Natural killer cell (primary cell): ENCODE measurements at regions of chr4 and their contacts with region 1.

Region 1: DNA sequence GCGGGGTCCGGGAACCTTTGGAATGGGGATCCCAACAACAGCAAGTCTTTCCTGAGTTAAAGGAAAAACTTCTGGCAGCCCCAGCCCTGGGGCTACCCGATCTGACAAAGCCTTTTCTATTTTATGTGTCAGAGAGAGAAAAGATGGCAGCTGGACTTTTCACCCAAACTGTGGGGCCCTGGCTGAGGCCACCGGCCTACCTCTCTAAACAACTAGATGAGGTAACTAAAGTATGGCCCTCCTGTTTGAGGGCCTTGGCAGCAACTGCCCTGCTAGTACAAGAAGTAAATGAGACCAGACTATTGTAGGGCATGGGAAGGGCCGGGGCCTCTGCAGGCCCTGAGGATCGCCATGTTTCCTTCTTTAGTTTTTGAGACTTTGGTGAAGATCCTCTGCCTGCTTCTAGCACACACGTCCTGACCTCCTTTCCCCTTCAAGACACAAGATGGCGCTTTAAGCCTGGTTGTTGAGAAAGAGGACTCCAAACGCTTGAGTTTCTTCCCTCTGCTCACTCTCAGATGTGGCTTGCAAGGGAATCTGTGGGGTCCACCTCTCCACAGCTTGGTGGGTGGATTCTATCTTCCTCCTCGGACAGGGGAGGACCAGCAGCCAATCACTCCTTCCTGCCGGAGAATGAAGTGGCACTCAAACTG is 18.5 kb upstream of the DRD5 start:
- DNase-seq: peak; percentile 21 to 60
- ATAC-seq: no peak
- H3K4me3 ChIP-seq: no peak overlapping the region
- H3K4me3 Mint-ChIP-seq: no peak overlapping the region
- H3K27ac ChIP-seq: no peak overlapping the region
- H3K27ac Mint-ChIP-seq: no peak overlapping the region
- H3K4me1 ChIP-seq: no peaks in the 10 kb centered on the region
- H3K4me1 Mint-ChIP-seq: no peaks in the 10 kb centered on the region
- H3K27me3 ChIP-seq: no peaks in the 10 kb centered on the region
- H3K27me3 Mint-ChIP-seq: peaks cover 12 to 13% of the 10 kb centered on the region in 2 donors
- CTCF ChIP-seq: peak; percentile 51

Region 2: GRCh38 chr4:9832640-9833308 is 69.8 kb after region 1 on chr4:
- intact Hi-C with region 1: no loop called
- DNase-seq: no peak
- ATAC-seq: no peak
- H3K4me3 ChIP-seq: no peak overlapping the region
- H3K4me3 Mint-ChIP-seq: no peak overlapping the region
- H3K27ac ChIP-seq: no peak overlapping the region
- H3K27ac Mint-ChIP-seq: no peak overlapping the region
- H3K4me1 ChIP-seq: no peaks in the 10 kb centered on the region
- H3K4me1 Mint-ChIP-seq: no peaks in the 10 kb centered on the region
- H3K27me3 ChIP-seq: no peaks in the 10 kb centered on the region
- H3K27me3 Mint-ChIP-seq: peaks cover 0 to 14% of the 10 kb centered on the region in 2 donors
- CTCF ChIP-seq: no peak

Region 3: DNA sequence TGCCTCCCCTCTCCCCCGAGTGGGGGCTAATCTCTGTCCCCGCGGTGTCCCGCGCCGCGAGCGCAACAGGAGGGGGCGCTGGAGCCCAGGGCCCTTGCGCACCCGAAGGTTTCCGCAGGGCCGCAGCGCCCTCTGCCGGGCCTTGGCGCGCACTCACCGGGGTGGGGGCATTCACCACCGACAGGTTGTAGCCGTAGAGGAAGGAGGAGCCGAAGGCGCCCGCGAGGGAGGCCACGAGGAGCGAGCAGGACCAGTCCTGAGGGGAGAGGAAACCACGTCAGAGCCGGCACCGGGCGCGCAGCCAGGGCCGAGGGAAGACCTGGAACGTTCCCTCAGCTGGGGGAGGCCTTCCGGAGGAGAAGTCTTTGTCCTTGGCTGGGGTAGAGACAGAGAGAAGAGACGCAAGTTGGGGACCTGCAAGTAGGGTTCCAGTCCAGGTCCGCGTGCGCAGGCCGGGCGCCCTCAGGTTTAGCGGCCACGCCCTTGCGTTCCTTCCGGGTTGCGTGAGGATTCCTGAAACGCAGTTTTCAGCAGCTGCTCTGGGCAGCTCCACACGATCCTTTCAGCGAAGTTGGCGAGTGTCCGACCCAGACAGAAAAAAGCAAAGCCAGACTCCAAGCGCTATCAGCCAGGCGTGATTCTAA is 256.0 kb after region 1 on chr4:
- intact Hi-C with region 1: loop called (anchors 1 kb)
- DNase-seq: peak; percentile 90 to 94
- ATAC-seq: peak; percentile 97 to 99 (median 98)
- H3K4me3 ChIP-seq: peak overlapping the region; percentile 58
- H3K4me3 Mint-ChIP-seq: peak overlapping the region; percentile 91
- H3K27ac ChIP-seq: peak overlapping the region; percentile 83
- H3K27ac Mint-ChIP-seq: peak overlapping the region; percentile 89 to 94
- H3K4me1 ChIP-seq: peaks cover 36% of the 10 kb centered on the region
- H3K4me1 Mint-ChIP-seq: peaks cover 13 to 18% of the 10 kb centered on the region in 2 donors
- H3K27me3 ChIP-seq: no peaks in the 10 kb centered on the region
- H3K27me3 Mint-ChIP-seq: peaks cover 0 to 4% of the 10 kb centered on the region in 2 donors
- CTCF ChIP-seq: peak; percentile 100

Region 4: GRCh38 chr4:10403633-10404445 is 640.9 kb after region 1 on chr4:
- intact Hi-C with region 1: loop called (anchors 5 kb)
- DNase-seq: peak in 1 of 2 donors; percentile 50
- ATAC-seq: peak in 1 of 3 donors; percentile 36
- H3K4me3 ChIP-seq: no peak overlapping the region
- H3K4me3 Mint-ChIP-seq: no peak overlapping the region
- H3K27ac ChIP-seq: no peak overlapping the region
- H3K27ac Mint-ChIP-seq: no peak overlapping the region
- H3K4me1 ChIP-seq: no peaks in the 10 kb centered on the region
- H3K4me1 Mint-ChIP-seq: no peaks in the 10 kb centered on the region
- H3K27me3 ChIP-seq: no peaks in the 10 kb centered on the region
- H3K27me3 Mint-ChIP-seq: peaks cover 3 to 11% of the 10 kb centered on the region in 2 donors
- CTCF ChIP-seq: peak; percentile 41